ENCODE measurements at regions of chr17 and their contacts with region 1.

Region 1: DNA sequence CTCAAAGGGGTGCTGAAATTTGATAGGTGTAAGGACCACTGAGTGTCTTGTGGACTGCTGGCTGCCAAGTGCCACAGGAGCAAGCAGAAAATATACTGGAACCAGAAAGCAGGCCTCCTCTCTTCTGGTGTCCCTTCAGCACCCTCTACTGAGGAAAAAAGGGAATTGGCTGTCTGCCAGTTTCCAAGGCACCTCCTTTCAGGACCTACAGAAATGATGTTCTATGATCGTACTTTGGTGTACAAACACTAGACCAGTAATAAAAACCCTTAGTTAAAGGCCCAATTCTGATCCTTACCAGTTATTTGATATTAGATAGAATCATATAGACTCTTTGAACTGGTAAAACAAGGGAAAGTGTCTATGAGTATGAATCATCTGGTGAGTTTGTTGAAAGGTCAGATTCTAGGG is 35.8 kb upstream of the BCAS3 start:
- DNase-seq: peak; percentile 48 to 52
- ATAC-seq: peak; percentile 75
- H3K4me3 ChIP-seq: no peak overlapping the region
- H3K27ac ChIP-seq: no peak overlapping the region
- H3K4me1 ChIP-seq: no peaks in the 10 kb centered on the region
- H3K27me3 ChIP-seq: no peaks in the 10 kb centered on the region

Region 2: GRCh38 chr17:60442271-60443173 is 199.3 kb before region 1 on chr17:
- intact Hi-C with region 1: loop called in 1 of 2 experiments (anchors 10 kb)
- DNase-seq: no peak
- ATAC-seq: no peak
- H3K4me3 ChIP-seq: no peak overlapping the region
- H3K27ac ChIP-seq: no peak overlapping the region
- H3K4me1 ChIP-seq: no peaks in the 10 kb centered on the region
- H3K27me3 ChIP-seq: no peaks in the 10 kb centered on the region

Measured in aorta (tissue), 5 donors.